ENCODE measurements at regions of chr1 and their contacts with region 1.

Region 1: GRCh38 chr1:44049839-44050238 is 18.6 kb upstream of the SLC6A9 start:
- DNase-seq: peak; percentile 82
- ATAC-seq: 0 out of 2 replicates have a peak, but pooled peaks have one; percentile 10
- H3K4me3 ChIP-seq: no peak overlapping the region
- H3K27ac ChIP-seq: peak overlapping the region; percentile 13; the same call in 1 of the 2 replicates
- H3K4me1 ChIP-seq: peaks cover 10% of the 10 kb centered on the region
- H3K27me3 ChIP-seq: no peaks in the 10 kb centered on the region
- CTCF ChIP-seq: no peak

Region 2: GRCh38 chr1:43763497-43763973 is 286.3 kb before region 1 on chr1:
- CTCF ChIA-PET with region 1: interaction called, 10 read pairs
- POLR2A ChIA-PET with region 1: no interaction called
- in situ Hi-C with region 1: no loop called
- intact Hi-C with region 1: no loop called
- DNase-seq: peak; percentile 82
- ATAC-seq: peak; percentile 98
- H3K4me3 ChIP-seq: no peak overlapping the region
- H3K27ac ChIP-seq: no peak overlapping the region; the same call in 1 of the 2 replicates
- H3K4me1 ChIP-seq: peaks cover 16% of the 10 kb centered on the region; the same call in 1 of the 2 replicates
- H3K27me3 ChIP-seq: no peaks in the 10 kb centered on the region
- CTCF ChIP-seq: peak; percentile 89

Region 3: DNA sequence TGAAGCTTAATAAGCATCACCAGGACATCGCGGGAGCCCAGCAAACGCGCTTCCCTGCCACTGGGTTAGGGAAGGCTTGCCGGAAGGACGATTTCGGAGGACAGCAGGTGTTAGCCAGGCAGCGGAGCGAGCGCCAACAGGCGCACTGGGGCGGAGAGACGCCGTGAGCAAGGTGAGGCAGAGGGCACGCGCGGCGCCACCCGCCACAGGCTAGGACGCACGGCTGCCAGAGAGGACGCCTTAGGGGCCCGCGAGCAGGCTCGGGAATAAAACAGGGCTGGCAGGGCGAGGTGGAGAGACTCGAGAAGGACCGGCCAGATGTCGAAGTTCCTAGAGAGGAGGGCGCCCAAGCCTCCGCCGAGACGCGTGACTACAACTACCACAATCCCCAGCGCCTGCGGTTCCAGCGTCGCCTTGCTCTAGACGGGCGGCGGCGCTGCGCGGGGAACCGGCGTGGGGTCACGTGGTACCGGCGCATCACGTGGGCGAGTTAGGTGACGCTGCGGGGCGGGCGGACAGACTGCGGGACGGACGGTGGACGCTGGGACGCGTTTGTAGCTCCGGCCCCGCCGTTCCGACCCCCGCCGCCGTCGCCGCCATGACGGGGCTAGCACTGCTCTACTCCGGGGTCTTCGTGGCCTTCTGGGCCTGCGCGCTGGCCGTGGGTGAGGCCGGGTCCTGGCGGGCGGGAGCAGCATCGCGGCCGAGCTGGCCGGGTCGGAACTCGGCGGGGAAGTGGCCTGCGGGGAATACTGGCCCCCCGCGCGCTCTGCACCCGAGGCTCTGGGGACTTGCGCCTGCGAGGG is 75.2 kb before region 1 on chr1 and contains the start of gene ATP6V0B:
- CTCF ChIA-PET with region 1: interaction called, 10 read pairs
- POLR2A ChIA-PET with region 1: no interaction called
- in situ Hi-C with region 1: no loop called
- intact Hi-C with region 1: no loop called
- DNase-seq: no peak
- ATAC-seq: peak; percentile 86
- H3K4me3 ChIP-seq: peak within 1 kb of the TSS; percentile 80 to 85
- H3K27ac ChIP-seq: peak within 1 kb of the TSS; percentile 89
- H3K4me1 ChIP-seq: peaks cover 43% of the 10 kb centered on the region
- H3K27me3 ChIP-seq: no peaks in the 10 kb centered on the region
- CTCF ChIP-seq: no peak
- total RNA-seq, gene ATP6V0B: 134 TPM

Region 4: DNA sequence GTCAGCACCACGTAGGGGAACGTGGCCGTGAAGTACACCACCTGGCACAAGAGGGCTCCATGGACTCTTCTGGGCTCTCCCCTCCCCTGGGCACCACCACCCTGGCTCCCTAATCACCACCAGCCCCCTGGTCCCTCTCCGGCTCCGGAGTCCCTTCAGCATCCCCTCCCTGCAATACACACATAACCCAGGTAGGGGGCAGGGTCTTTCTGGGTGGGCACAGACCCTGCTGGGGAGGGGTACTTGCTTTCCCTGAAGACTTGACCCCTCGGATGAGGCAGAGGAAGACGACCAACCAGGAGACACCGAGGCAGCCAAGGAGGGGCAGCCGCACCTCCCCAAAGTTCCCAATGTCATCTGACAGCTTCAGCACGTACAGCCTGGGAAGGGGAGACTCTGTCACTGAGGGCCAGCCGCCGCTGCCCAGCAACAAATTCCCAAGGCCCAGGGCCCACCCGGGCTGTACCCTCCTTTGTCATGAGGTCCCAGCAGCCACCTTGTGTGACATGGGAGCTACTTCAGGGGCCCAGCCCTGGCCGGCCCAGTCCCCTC is 47.2 kb before region 1 on chr1:
- CTCF ChIA-PET with region 1: interaction called, 29 read pairs
- POLR2A ChIA-PET with region 1: no interaction called
- in situ Hi-C with region 1: no loop called
- intact Hi-C with region 1: no loop called
- DNase-seq: no peak
- ATAC-seq: no peak
- H3K4me3 ChIP-seq: no peak overlapping the region
- H3K27ac ChIP-seq: no peak overlapping the region
- H3K4me1 ChIP-seq: peaks cover 2% of the 10 kb centered on the region; the same call in 1 of the 2 replicates
- H3K27me3 ChIP-seq: no peaks in the 10 kb centered on the region
- CTCF ChIP-seq: no peak; the same call in 1 of the 2 replicates

Region 5: DNA sequence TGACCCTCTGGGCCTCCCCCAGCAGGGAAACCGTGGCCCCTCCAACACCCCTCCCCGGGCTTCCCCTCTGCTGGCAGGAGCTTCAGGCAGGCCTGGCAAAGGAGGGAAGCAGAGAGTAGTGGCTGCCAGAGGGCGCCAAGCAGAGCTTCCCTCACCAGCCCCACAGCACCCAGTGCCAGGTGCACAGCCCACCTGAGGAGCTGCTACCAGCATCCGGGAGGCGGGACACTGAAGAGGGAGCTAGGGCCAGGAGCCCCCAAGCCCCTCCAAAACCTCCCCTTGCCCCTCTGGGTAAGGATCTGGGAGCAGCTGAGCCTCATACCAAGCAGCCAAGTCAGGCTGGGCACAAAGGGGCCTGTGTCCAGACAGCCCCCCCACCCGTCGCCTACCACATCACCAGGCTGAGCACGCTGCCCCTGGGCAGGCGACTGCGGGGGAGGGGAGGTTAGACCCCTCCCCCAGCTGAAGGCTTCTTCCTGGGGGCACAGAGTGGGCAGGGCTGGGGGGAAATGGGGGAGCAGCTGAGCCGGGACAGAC is 38.8 kb before region 1 on chr1:
- CTCF ChIA-PET with region 1: interaction called, 10 read pairs
- POLR2A ChIA-PET with region 1: no interaction called
- in situ Hi-C with region 1: no loop called
- intact Hi-C with region 1: no loop called
- DNase-seq: no peak
- ATAC-seq: peak; percentile 53; the same call in 1 of the 2 replicates
- H3K4me3 ChIP-seq: no peak overlapping the region
- H3K27ac ChIP-seq: no peak overlapping the region
- H3K4me1 ChIP-seq: peaks cover under 1% of the 10 kb centered on the region; the same call in 1 of the 2 replicates
- H3K27me3 ChIP-seq: no peaks in the 10 kb centered on the region
- CTCF ChIP-seq: no peak

Region 6: DNA sequence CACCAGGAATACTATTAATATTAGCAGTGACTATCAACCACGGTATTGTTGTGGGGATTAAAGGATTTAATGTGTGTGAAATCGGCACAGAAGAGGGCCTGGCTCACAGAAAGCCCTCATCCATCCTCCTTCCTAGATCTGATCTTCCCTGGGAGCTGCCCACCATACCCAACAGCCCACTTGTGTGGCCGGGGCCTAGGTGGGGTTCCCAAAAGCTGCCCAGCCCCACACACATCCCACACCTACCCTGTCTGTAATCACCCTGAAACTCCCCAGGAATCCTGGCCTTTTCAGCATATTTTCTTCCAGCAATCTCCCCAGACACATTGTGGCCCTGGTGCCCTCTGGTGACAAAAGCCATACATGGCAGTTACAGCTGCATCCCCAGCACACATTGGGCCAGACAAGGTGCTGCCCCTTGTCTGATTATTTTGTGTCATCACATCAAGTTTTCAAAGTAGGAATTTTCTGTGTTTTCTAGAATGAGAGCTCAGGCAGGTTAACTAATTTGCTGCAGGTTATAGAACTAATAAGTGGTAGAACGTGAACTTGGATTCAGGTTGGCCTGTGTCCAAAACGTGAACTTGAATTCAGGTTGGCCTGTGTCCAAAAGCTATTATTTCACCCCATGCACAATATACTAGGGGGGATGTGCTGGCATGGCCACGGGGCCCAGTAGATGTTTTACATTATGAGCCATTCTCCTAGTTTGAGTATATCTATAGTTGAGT is 13.3 kb before region 1 on chr1:
- CTCF ChIA-PET with region 1: interaction called, 20 read pairs
- POLR2A ChIA-PET with region 1: interaction called, 7 read pairs
- in situ Hi-C with region 1: no loop called
- intact Hi-C with region 1: no loop called
- DNase-seq: no peak
- ATAC-seq: peak; percentile 87
- H3K4me3 ChIP-seq: no peak overlapping the region
- H3K27ac ChIP-seq: no peak overlapping the region
- H3K4me1 ChIP-seq: peaks cover 3% of the 10 kb centered on the region; the same call in 1 of the 2 replicates
- H3K27me3 ChIP-seq: no peaks in the 10 kb centered on the region
- CTCF ChIP-seq: peak; percentile 92

Measured in Panc1 (cell line).